Activated CD4-positive, alpha-beta memory T cell treated with anti-CD3 and anti-CD28 coated beads for 36 hours (primary cell): ENCODE measurements at regions of chr11 and their contacts with region 1.

Region 1: DNA sequence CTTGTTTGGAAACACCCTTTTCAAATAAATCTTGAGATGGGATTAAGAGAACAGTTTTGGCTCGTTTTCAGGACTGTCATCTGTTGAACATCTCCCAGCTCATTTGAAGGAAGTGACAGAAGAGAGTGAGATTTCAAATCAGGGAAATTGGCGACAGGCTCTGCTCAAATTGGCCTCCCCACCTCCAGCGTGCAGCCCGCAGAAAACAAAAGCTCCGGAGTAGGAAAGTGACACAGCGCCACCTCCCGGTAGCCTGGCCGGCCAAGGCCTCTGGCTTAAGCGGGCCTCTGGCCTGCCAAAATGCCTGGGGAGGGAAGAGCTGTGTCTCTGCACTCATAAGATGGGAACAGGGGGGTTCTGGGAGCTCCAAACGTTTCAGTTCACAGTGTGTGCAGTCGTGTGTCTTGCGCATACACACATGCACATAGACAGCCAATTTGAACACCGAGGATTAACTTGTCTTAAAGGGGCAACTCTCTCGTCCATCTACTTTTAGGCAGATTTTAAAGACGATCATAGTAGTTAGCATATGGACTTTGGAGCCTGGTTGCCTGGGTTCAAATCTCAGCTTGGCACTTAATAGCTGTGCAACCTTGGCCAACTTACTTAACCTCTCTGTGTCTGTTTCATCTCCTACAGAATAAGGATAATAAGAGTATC is 132.7 kb upstream of the RCN1 start:
- DNase-seq: peak; percentile 76
- H3K4me3 Mint-ChIP-seq: no peak overlapping the region
- H3K27ac Mint-ChIP-seq: no peak overlapping the region
- H3K4me1 Mint-ChIP-seq: peaks cover 4% of the 10 kb centered on the region
- H3K27me3 Mint-ChIP-seq: no peaks in the 10 kb centered on the region

Region 2: DNA sequence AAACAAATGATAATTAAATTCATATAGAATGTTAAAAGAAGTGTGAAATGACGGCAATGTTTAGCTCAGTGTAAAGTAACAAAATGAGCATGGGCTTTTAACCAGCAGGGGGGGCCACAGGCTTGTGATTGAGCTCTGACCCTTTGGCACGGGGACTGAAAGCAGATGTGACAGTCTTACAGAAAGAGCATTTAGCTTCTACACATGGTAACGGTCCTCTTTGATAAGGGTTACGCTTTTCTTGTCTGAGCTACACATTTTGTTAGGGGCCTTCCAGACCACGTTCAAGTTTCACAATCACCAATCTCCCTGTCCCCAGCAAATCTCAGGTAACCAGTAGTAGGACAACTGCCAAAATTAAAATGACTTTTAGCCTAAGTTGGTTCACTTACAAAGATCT is 851.1 kb before region 1 on chr11:
- CTCF ChIA-PET with region 1: interaction called, 22 read pairs
- POLR2A ChIA-PET with region 1: no interaction called
- intact Hi-C with region 1: loop called (anchors 2 kb)
- DNase-seq: peak; percentile 66
- H3K4me3 Mint-ChIP-seq: no peak overlapping the region
- H3K27ac Mint-ChIP-seq: no peak overlapping the region
- H3K4me1 Mint-ChIP-seq: no peaks in the 10 kb centered on the region
- H3K27me3 Mint-ChIP-seq: no peaks in the 10 kb centered on the region

Region 3: GRCh38 chr11:31340903-31341572 is 617.2 kb before region 1 on chr11:
- CTCF ChIA-PET with region 1: interaction called, 11 read pairs
- POLR2A ChIA-PET with region 1: no interaction called
- intact Hi-C with region 1: no loop called
- DNase-seq: peak; percentile 16
- H3K4me3 Mint-ChIP-seq: no peak overlapping the region
- H3K27ac Mint-ChIP-seq: no peak overlapping the region
- H3K4me1 Mint-ChIP-seq: no peaks in the 10 kb centered on the region
- H3K27me3 Mint-ChIP-seq: peaks cover 11% of the 10 kb centered on the region

Region 4: DNA sequence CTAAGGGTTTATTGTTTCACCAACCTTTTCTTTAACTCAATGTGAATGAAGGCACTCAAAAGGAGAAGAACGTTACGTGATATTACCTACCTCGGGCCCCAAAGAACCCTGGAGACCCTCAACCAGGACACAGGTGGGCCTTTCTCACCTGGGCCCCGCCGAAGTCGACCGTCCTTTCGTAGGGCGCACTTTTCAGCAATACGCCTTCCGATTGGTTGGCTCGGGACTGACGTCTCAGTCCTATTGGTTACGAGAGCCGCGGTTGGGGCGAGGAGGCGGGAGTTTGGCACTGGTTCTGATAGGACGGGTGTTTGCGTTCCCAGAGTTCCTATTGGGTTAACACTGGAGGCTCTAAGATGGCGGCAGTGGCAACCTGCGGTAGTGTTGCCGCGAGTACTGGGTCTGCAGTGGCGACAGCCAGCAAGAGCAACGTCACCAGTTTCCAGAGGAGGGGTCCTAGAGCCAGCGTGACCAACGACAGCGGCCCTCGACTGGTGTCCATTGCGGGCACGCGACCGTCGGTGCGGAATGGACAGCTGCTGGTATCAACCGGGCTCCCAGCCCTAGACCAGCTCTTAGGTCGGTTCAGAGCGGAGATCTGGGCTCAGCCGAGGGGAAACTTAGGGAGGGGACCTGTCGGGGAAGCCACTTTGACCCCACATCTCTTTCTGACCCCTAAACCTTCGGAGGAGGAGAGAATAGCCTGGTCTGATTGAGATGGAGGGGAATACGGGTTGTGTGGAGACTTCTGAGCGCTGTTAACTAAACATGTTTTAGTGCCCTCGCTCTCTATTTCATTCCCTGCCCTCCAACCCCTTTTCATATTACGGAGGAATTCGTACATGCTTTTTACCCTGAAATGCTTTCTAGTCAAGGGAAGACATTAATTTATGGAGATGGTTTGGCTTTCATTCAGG is 448.5 kb before region 1 on chr11 and contains the starts of genes ELP4 and IMMP1L:
- CTCF ChIA-PET with region 1: no interaction called
- POLR2A ChIA-PET with region 1: no interaction called
- intact Hi-C with region 1: loop called (anchors 5 kb)
- DNase-seq: peak; percentile 97
- H3K4me3 Mint-ChIP-seq: peak within 1 kb of the TSS; percentile 97
- H3K27ac Mint-ChIP-seq: peak within 1 kb of the TSS; percentile 88
- H3K4me1 Mint-ChIP-seq: peaks cover 30% of the 10 kb centered on the region
- H3K27me3 Mint-ChIP-seq: no peaks in the 10 kb centered on the region
- total RNA-seq, gene ELP4: 18.3 to 18.5 TPM
- total RNA-seq, gene IMMP1L: 20.4 to 21.8 TPM

Region 5: GRCh38 chr11:31968461-31969358 is 10.5 kb after region 1 on chr11:
- CTCF ChIA-PET with region 1: interaction called, 11 read pairs
- POLR2A ChIA-PET with region 1: no interaction called
- intact Hi-C with region 1: no loop called
- DNase-seq: no peak
- H3K4me3 Mint-ChIP-seq: no peak overlapping the region
- H3K27ac Mint-ChIP-seq: no peak overlapping the region
- H3K4me1 Mint-ChIP-seq: no peaks in the 10 kb centered on the region
- H3K27me3 Mint-ChIP-seq: no peaks in the 10 kb centered on the region